ENCODE measurements at regions of chr13 and their contacts with region 1.

Region 1: GRCh38 chr13:23899555-23899954 is 2.3 kb upstream of the C1QTNF9B start:
- DNase-seq: peak in 2 of 4 experiments; percentile 13 to 45
- ATAC-seq: peak; percentile 75
- H3K4me3 ChIP-seq: no peak overlapping the region
- H3K27ac ChIP-seq: no peak overlapping the region
- H3K4me1 ChIP-seq: peaks cover 0 to 9% of the 10 kb centered on the region in 2 experiments; a peak in 2 of 5 replicates
- H3K27me3 ChIP-seq: peaks cover 3 to 15% of the 10 kb centered on the region in 2 experiments; a peak in 2 of 5 replicates
- CTCF ChIP-seq: peak; percentile 27 to 63 (median 49); a peak in 4 of 6 replicates
- EP300 ChIP-seq: no peak
- POLR2A ChIP-seq: no peak
- RAD21 ChIP-seq: no peak

Region 2: GRCh38 chr13:22812794-22813193 is 1086.8 kb before region 1 on chr13:
- CTCF ChIA-PET with region 1: no interaction called
- POLR2A ChIA-PET with region 1: no interaction called
- in situ Hi-C with region 1: no loop called
- intact Hi-C with region 1: no loop called
- DNase-seq: peak in 2 of 4 experiments; percentile 5 to 51
- ATAC-seq: peak; percentile 71
- H3K4me3 ChIP-seq: no peak overlapping the region
- H3K27ac ChIP-seq: peak overlapping the region; percentile 72; the same call in 2 of the 3 replicates
- H3K4me1 ChIP-seq: peaks cover 0 to 22% of the 10 kb centered on the region in 2 experiments; a peak in 3 of 5 replicates
- H3K27me3 ChIP-seq: no peaks in the 10 kb centered on the region
- CTCF ChIP-seq: no peak
- EP300 ChIP-seq: no peak
- POLR2A ChIP-seq: no peak
- RAD21 ChIP-seq: no peak

Region 3: GRCh38 chr13:22964245-22964966 is 935.1 kb before region 1 on chr13:
- CTCF ChIA-PET with region 1: no interaction called
- POLR2A ChIA-PET with region 1: no interaction called
- in situ Hi-C with region 1: no loop called
- intact Hi-C with region 1: no loop called
- DNase-seq: no peak
- ATAC-seq: no peak; the same call in 2 of the 3 replicates
- H3K4me3 ChIP-seq: no peak overlapping the region
- H3K27ac ChIP-seq: no peak overlapping the region
- H3K4me1 ChIP-seq: no peaks in the 10 kb centered on the region; a peak in 2 of 5 replicates
- H3K27me3 ChIP-seq: no peaks in the 10 kb centered on the region; a peak in 1 of 5 replicates
- CTCF ChIP-seq: no peak
- EP300 ChIP-seq: no peak
- POLR2A ChIP-seq: no peak
- RAD21 ChIP-seq: no peak

Region 4: GRCh38 chr13:23243066-23243465 is 656.5 kb before region 1 on chr13:
- CTCF ChIA-PET with region 1: no interaction called
- POLR2A ChIA-PET with region 1: no interaction called
- in situ Hi-C with region 1: no loop called
- intact Hi-C with region 1: no loop called
- DNase-seq: no peak
- ATAC-seq: no peak
- H3K4me3 ChIP-seq: no peak overlapping the region
- H3K27ac ChIP-seq: no peak overlapping the region
- H3K4me1 ChIP-seq: no peaks in the 10 kb centered on the region
- H3K27me3 ChIP-seq: no peaks in the 10 kb centered on the region
- CTCF ChIP-seq: no peak
- EP300 ChIP-seq: no peak
- POLR2A ChIP-seq: no peak
- RAD21 ChIP-seq: no peak

Region 5: GRCh38 chr13:23466144-23467002 is 433.2 kb before region 1 on chr13:
- CTCF ChIA-PET with region 1: interaction called, 4 read pairs
- POLR2A ChIA-PET with region 1: no interaction called
- in situ Hi-C with region 1: loop called (anchors 10 kb)
- intact Hi-C with region 1: loop called (anchors 10 kb)
- DNase-seq: peak; percentile 13 to 52 (median 34)
- ATAC-seq: peak; percentile 98
- H3K4me3 ChIP-seq: no peak overlapping the region; the same call in 1 of the 2 replicates
- H3K27ac ChIP-seq: no peak overlapping the region
- H3K4me1 ChIP-seq: peaks cover 0 to 8% of the 10 kb centered on the region in 2 experiments; a peak in 2 of 5 replicates
- H3K27me3 ChIP-seq: peaks cover 0 to 11% of the 10 kb centered on the region in 2 experiments; a peak in 2 of 5 replicates
- CTCF ChIP-seq: peak; percentile 35 to 59 (median 49); a peak in 4 of 6 replicates
- EP300 ChIP-seq: no peak
- POLR2A ChIP-seq: no peak
- RAD21 ChIP-seq: peak; percentile 36 to 46

Region 6: GRCh38 chr13:23859904-23860303 is 39.7 kb before region 1 on chr13:
- CTCF ChIA-PET with region 1: no interaction called
- POLR2A ChIA-PET with region 1: no interaction called
- in situ Hi-C with region 1: no loop called
- intact Hi-C with region 1: no loop called
- DNase-seq: peak; percentile 10 to 40 (median 22)
- ATAC-seq: peak; percentile 51
- H3K4me3 ChIP-seq: no peak overlapping the region
- H3K27ac ChIP-seq: no peak overlapping the region
- H3K4me1 ChIP-seq: peaks cover 0 to 4% of the 10 kb centered on the region in 2 experiments; a peak in 2 of 5 replicates
- H3K27me3 ChIP-seq: no peaks in the 10 kb centered on the region
- CTCF ChIP-seq: no peak
- EP300 ChIP-seq: peak; percentile 53
- POLR2A ChIP-seq: no peak
- RAD21 ChIP-seq: no peak